ENCODE measurements at regions of chr7 and their contacts with region 1.

Region 1: DNA sequence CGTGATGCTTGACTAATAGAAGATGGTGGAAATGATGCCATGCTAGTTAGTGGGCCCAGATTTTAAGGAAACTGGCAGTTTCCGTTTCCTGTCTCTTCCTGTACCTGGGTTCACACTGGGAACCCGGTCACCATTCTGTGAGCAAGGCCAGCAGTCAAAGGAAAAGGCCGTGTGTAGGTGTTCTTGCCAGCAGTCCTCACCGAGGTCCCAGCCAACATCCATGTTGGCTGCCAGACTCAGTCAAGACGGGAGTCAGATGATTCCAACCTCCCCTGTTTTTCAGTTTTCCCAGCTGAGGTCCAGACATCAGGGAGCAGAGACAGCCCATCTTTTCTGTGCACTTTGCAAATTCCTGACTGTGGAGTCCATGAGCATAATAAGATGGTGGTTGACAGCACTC is 15.2 kb upstream of the PILRB start:
- DNase-seq: no peak
- H3K4me3 ChIP-seq: no peak overlapping the region
- H3K4me3 Mint-ChIP-seq: no peak overlapping the region
- H3K27ac Mint-ChIP-seq: no peak overlapping the region
- H3K4me1 ChIP-seq: peaks cover 11% of the 10 kb centered on the region; the same call in 1 of the 2 replicates
- H3K4me1 Mint-ChIP-seq: peaks cover 23% of the 10 kb centered on the region
- H3K27me3 ChIP-seq: no peaks in the 10 kb centered on the region
- H3K27me3 Mint-ChIP-seq: no peaks in the 10 kb centered on the region
- CTCF ChIP-seq: no peak

Region 2: GRCh38 chr7:100266576-100267354 is 76.0 kb before region 1 on chr7:
- CTCF ChIA-PET with region 1: no interaction called
- POLR2A ChIA-PET with region 1: no interaction called
- intact Hi-C with region 1: loop called (anchors 5 kb)
- DNase-seq: peak in 1 of 2 experiments; percentile 50
- H3K4me3 ChIP-seq: no peak overlapping the region
- H3K4me3 Mint-ChIP-seq: peak overlapping the region; percentile 25
- H3K27ac Mint-ChIP-seq: peak overlapping the region; percentile 62
- H3K4me1 ChIP-seq: peaks cover 36% of the 10 kb centered on the region
- H3K4me1 Mint-ChIP-seq: peaks cover 24% of the 10 kb centered on the region
- H3K27me3 ChIP-seq: no peaks in the 10 kb centered on the region
- H3K27me3 Mint-ChIP-seq: no peaks in the 10 kb centered on the region
- CTCF ChIP-seq: no peak

Region 3: GRCh38 chr7:100444311-100445278 is 101.8 kb after region 1 on chr7:
- CTCF ChIA-PET with region 1: interaction called, 10 read pairs
- POLR2A ChIA-PET with region 1: no interaction called
- intact Hi-C with region 1: no loop called
- DNase-seq: no peak
- H3K4me3 ChIP-seq: no peak overlapping the region
- H3K4me3 Mint-ChIP-seq: no peak overlapping the region
- H3K27ac Mint-ChIP-seq: peak overlapping the region; percentile 37
- H3K4me1 ChIP-seq: peaks cover 13% of the 10 kb centered on the region
- H3K4me1 Mint-ChIP-seq: no peaks in the 10 kb centered on the region
- H3K27me3 ChIP-seq: no peaks in the 10 kb centered on the region
- H3K27me3 Mint-ChIP-seq: no peaks in the 10 kb centered on the region
- CTCF ChIP-seq: no peak

Region 4: DNA sequence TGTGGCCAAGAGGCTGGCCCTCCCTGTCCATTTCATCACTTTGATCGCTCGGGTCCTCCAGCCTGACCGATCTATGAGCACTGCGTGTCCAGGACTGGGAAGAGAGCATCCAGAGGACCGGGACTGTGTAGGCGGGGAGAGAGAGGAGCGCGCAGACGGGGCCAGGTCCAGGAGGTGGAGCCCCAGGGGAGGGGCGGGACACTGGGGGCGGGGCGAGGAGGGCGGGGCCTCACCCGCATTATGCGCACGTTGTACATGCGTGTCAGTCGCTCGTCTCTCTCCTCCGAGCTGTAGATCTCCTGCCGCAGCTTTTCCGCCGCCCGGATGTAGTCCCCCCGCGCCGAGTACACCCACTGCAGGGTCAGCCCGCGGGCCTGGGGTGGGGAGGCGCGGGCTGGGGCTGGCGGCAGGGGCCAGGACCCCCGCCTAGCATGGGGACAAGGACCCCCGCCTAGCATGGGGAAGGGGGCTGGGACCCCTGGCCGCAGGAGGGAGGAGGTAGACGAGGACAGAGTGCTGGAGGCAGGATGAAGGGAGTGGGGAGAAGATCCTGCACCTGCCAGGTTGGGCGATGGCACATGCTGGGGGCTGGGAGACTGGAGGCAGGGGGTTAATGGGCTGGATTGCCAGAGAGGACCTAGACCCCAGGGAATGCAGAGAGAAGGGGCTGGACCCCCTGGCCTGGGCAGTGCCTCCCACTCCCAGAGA is 283.9 kb after region 1 on chr7:
- CTCF ChIA-PET with region 1: no interaction called
- POLR2A ChIA-PET with region 1: no interaction called
- intact Hi-C with region 1: no loop called
- DNase-seq: peak; percentile 55 to 77
- H3K4me3 ChIP-seq: peak overlapping the region; percentile 12
- H3K4me3 Mint-ChIP-seq: no peak overlapping the region
- H3K27ac Mint-ChIP-seq: no peak overlapping the region
- H3K4me1 ChIP-seq: no peaks in the 10 kb centered on the region
- H3K4me1 Mint-ChIP-seq: peaks cover 4% of the 10 kb centered on the region
- H3K27me3 ChIP-seq: no peaks in the 10 kb centered on the region
- H3K27me3 Mint-ChIP-seq: no peaks in the 10 kb centered on the region
- CTCF ChIP-seq: no peak

Measured in Caco-2 (cell line).